ENCODE measurements at regions of chr5 and their contacts with region 1.

Region 1: GRCh38 chr5:177454397-177455035 is 7.9 kb downstream of the PRR7 start:
- DNase-seq: peak; percentile 92
- H3K4me3 ChIP-seq: peak overlapping the region; percentile 6 to 38 (median 21)
- H3K27ac ChIP-seq: peak overlapping the region; percentile 77
- H3K4me1 ChIP-seq: peaks cover 28% of the 10 kb centered on the region
- H3K27me3 ChIP-seq: no peaks in the 10 kb centered on the region
- CTCF ChIP-seq: peak; percentile 83 to 99
- POLR2A ChIP-seq: peak; percentile 59

Region 2: GRCh38 chr5:177311723-177312648 is 142.5 kb before region 1 on chr5 and contains the start of gene MXD3:
- CTCF ChIA-PET with region 1: interaction called, 8 read pairs
- POLR2A ChIA-PET with region 1: no interaction called
- dilution Hi-C with region 1: no loop called
- intact Hi-C with region 1: loop called (anchors 2 kb)
- DNase-seq: peak; percentile 92
- H3K4me3 ChIP-seq: peak within 1 kb of the TSS; percentile 49 to 64 (median 58)
- H3K27ac ChIP-seq: peak within 1 kb of the TSS; percentile 78
- H3K4me1 ChIP-seq: peaks cover 22% of the 10 kb centered on the region
- H3K27me3 ChIP-seq: no peaks in the 10 kb centered on the region
- CTCF ChIP-seq: no peak
- POLR2A ChIP-seq: peak; percentile 63
- total RNA-seq, gene MXD3: 30.5 and 44.2 TPM in 2 replicates

Region 3: GRCh38 chr5:177390363-177391300 is 63.9 kb before region 1 on chr5:
- CTCF ChIA-PET with region 1: interaction called, 246 read pairs
- POLR2A ChIA-PET with region 1: interaction called, 12 read pairs
- dilution Hi-C with region 1: no loop called
- intact Hi-C with region 1: loop called (anchors 1 kb)
- DNase-seq: peak; percentile 88
- H3K4me3 ChIP-seq: no peak overlapping the region
- H3K27ac ChIP-seq: no peak overlapping the region
- H3K4me1 ChIP-seq: no peaks in the 10 kb centered on the region
- H3K27me3 ChIP-seq: no peaks in the 10 kb centered on the region
- CTCF ChIP-seq: peak; percentile 90 to 92
- POLR2A ChIP-seq: no peak

Region 4: GRCh38 chr5:177409043-177409801 is 45.3 kb before region 1 on chr5 and contains the start of gene F12:
- CTCF ChIA-PET with region 1: interaction called, 288 read pairs
- POLR2A ChIA-PET with region 1: interaction called, 7 read pairs
- dilution Hi-C with region 1: no loop called
- intact Hi-C with region 1: loop called (anchors 1 kb)
- DNase-seq: no peak
- H3K4me3 ChIP-seq: no peak within 1 kb of the TSS
- H3K27ac ChIP-seq: no peak within 1 kb of the TSS
- H3K4me1 ChIP-seq: peaks cover 5% of the 10 kb centered on the region
- H3K27me3 ChIP-seq: peaks cover 0 to 6% of the 10 kb centered on the region in 2 experiments
- CTCF ChIP-seq: no peak
- POLR2A ChIP-seq: no peak
- total RNA-seq, gene F12: 1.00 and 1.4 TPM in 2 replicates

Region 5: DNA sequence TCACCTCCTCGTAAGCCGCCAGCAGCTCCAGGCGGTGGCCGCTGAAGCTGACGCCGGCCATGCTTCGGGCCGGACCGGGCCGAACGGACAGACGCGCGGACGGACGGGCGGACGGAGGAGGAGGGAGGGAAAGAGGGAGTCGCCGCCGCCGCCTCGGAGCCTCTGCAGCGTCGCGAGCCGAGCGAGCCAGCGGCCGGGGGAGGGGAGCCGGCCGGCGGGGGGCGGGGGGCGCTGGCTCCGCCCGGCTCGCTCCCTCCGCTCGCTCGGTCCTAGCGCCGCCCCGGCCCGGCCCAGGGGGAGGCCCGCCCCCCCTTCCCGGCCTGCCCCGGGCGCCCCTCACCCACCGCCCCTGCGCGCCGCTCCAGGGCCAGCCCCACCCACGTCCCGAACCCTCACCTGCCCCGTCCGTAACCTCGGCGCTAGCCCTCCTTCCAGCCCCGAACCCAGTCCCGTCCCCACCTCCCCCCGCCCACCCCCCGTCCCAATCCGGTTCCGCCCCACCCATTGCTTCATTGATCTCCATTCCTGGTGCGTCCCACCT is 19.0 kb after region 1 on chr5 and contains the start of gene DBN1:
- CTCF ChIA-PET with region 1: interaction called, 57 read pairs
- POLR2A ChIA-PET with region 1: interaction called, 4 read pairs
- dilution Hi-C with region 1: no loop called
- intact Hi-C with region 1: loop called (anchors 1 kb)
- DNase-seq: peak; percentile 30
- H3K4me3 ChIP-seq: peak within 1 kb of the TSS; percentile 58 to 82 (median 72)
- H3K27ac ChIP-seq: peak within 1 kb of the TSS; percentile 42
- H3K4me1 ChIP-seq: peaks cover 31% of the 10 kb centered on the region
- H3K27me3 ChIP-seq: no peaks in the 10 kb centered on the region
- CTCF ChIP-seq: no peak
- POLR2A ChIP-seq: peak; percentile 33
- total RNA-seq, gene DBN1: 310 and 336 TPM in 2 replicates

Region 6: DNA sequence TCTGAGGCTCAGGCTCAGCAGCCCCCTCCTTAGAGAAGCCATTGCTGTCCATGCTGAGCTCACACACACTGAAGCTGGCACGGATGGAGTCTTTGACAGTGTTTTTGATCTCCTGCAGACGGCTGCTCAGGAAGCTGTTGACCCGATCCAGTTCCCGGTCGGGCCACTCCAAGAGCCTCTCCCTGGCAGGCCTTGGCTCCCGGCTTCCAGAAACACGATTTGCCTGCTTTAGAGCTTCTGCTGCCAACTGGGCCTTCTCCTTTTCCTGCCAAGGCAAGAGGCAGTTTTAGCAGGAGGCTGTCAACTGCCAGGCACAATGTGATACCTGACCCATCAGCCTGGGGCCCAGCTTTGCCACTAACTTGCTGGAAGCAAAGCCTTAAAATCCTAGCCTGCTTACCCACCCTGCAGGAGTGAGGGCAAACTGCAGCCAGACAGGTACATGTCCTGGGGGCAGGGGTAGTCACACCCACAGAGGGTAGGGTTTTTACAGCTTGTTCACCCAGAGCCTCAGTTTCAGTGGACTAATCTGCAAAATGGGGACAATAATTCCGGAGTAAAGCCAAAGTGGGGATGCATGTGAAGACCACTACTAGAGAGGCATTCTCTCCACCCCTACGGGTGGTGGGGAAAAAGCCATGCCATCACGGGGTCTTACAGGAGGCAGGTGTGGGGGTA is 70.6 kb after region 1 on chr5:
- CTCF ChIA-PET with region 1: no interaction called
- POLR2A ChIA-PET with region 1: no interaction called
- dilution Hi-C with region 1: no loop called
- intact Hi-C with region 1: no loop called
- DNase-seq: no peak
- H3K4me3 ChIP-seq: no peak overlapping the region
- H3K27ac ChIP-seq: no peak overlapping the region
- H3K4me1 ChIP-seq: no peaks in the 10 kb centered on the region
- H3K27me3 ChIP-seq: no peaks in the 10 kb centered on the region
- CTCF ChIP-seq: no peak
- POLR2A ChIP-seq: no peak